Ovary (tissue), 10 donors: ENCODE measurements at regions of chr5 and their contacts with region 1.

Region 1: GRCh38 chr5:137660349-137660817 is 75.5 kb downstream of the KLHL3 start:
- DNase-seq: peak; percentile 52 to 74 (median 62)
- H3K4me3 ChIP-seq: no peak overlapping the region
- H3K27ac ChIP-seq: no peak overlapping the region
- H3K4me1 ChIP-seq: no peaks in the 10 kb centered on the region
- H3K27me3 ChIP-seq: no peaks in the 10 kb centered on the region
- CTCF ChIP-seq: peak; percentile 26 to 64 (median 55)
- EP300 ChIP-seq: no peak
- POLR2A ChIP-seq: no peak

Region 2: GRCh38 chr5:137481596-137481995 is 178.8 kb before region 1 on chr5:
- intact Hi-C with region 1: no loop called
- DNase-seq: no peak
- H3K4me3 ChIP-seq: no peak overlapping the region
- H3K27ac ChIP-seq: no peak overlapping the region
- H3K4me1 ChIP-seq: no peaks in the 10 kb centered on the region
- H3K27me3 ChIP-seq: no peaks in the 10 kb centered on the region
- CTCF ChIP-seq: no peak
- EP300 ChIP-seq: no peak
- POLR2A ChIP-seq: no peak

Region 3: GRCh38 chr5:137688210-137688840 is 27.9 kb after region 1 on chr5:
- intact Hi-C with region 1: no loop called
- DNase-seq: no peak
- H3K4me3 ChIP-seq: no peak overlapping the region
- H3K27ac ChIP-seq: no peak overlapping the region
- H3K4me1 ChIP-seq: no peaks in the 10 kb centered on the region
- H3K27me3 ChIP-seq: no peaks in the 10 kb centered on the region
- CTCF ChIP-seq: no peak
- EP300 ChIP-seq: no peak
- POLR2A ChIP-seq: no peak

Region 4: DNA sequence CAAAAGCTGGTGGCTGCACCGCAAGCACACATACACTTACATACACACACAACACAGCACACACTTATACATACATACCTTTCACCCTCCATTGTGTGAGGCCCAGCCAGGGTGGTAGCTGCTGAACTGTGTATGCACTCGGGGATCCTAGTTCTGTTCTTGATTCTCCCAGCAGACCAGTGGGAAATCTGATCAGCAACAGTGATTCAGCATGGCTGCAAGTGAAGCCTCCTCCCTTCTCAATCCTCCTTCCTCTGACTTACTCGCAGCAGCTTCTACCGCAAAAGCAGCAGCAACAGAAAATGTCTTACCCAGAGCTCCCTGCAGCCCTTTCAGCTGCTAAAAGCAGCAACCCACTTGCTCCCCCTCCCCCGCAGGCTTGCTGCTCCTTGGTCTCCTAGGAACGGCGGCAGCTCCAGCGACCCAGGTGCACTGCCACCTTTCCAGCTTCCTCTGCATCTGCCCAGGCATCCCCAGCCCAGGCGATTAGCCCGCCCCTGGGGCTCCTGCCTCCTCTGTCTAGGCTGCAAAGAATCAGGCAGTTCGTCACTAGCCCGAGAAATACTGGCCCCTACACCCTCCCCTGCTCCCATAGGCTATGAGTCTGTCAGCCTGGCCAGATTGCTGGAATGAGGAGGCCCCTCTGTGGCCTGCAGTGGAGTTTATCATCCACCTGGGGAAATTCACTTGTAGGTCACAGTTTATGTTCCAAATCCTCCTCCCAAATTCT is 75.3 kb after region 1 on chr5 and contains the start of gene KLHL3:
- intact Hi-C with region 1: loop called in 3 of 4 experiments (anchors 2 to 5 kb)
- DNase-seq: peak; percentile 19 to 47 (median 41)
- H3K4me3 ChIP-seq: peak within 1 kb of the TSS; percentile 31
- H3K27ac ChIP-seq: no peak within 1 kb of the TSS
- H3K4me1 ChIP-seq: peaks cover 2% of the 10 kb centered on the region
- H3K27me3 ChIP-seq: no peaks in the 10 kb centered on the region
- CTCF ChIP-seq: no peak
- EP300 ChIP-seq: no peak
- POLR2A ChIP-seq: no peak
- total RNA-seq, gene KLHL3: 5.0 to 15.7 (median 8.7) TPM